ENCODE measurements at regions of chr12 and their contacts with region 1.

Region 1: DNA sequence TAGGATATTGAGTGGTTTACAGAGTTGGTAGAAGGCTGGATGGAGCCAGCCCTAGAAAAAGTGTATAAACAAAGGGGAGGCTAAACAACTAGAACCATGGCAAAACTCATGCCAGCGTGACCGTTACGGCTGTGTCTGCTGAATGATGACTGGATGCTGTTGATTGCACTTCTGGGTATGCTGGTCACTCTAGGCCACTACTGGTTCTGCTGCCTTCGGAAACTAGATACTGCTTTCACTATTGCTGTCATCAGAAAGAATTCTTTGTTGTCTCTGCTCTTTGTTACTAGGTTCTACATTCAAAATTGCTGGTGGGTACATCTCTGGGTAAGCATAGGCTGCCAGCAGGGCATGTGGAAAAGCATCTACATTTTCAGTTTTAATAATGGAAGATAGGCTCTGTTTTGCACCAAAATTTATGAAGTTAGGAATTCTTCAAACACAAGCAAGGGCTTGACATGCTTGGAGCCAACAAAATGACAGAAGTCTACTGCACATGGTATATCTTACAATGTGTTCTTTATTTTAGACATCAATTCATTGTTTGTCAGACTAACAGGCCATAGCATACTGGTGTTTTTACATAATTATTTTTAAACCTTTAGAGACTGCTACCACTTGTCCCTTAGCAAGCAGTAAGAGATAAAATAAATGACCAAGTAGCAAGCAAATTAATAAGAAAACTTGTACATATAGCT is 15.4 kb downstream of the MON2 start:
- DNase-seq: no peak
- ATAC-seq: no peak
- H3K4me3 ChIP-seq: no peak overlapping the region
- H3K27ac ChIP-seq: no peak overlapping the region
- H3K4me1 ChIP-seq: no peaks in the 10 kb centered on the region
- H3K27me3 ChIP-seq: no peaks in the 10 kb centered on the region
- CTCF ChIP-seq: no peak
- EP300 ChIP-seq: no peak
- POLR2A ChIP-seq: no peak
- RAD21 ChIP-seq: no peak

Region 2: GRCh38 chr12:62446754-62447452 is 35.1 kb before region 1 on chr12:
- CTCF ChIA-PET with region 1: no interaction called
- POLR2A ChIA-PET with region 1: no interaction called
- in situ Hi-C with region 1: no loop called
- intact Hi-C with region 1: no loop called
- DNase-seq: no peak
- ATAC-seq: no peak
- H3K4me3 ChIP-seq: no peak overlapping the region
- H3K27ac ChIP-seq: no peak overlapping the region
- H3K4me1 ChIP-seq: no peaks in the 10 kb centered on the region
- H3K27me3 ChIP-seq: no peaks in the 10 kb centered on the region
- CTCF ChIP-seq: no peak
- EP300 ChIP-seq: no peak
- POLR2A ChIP-seq: no peak
- RAD21 ChIP-seq: no peak

Region 3: DNA sequence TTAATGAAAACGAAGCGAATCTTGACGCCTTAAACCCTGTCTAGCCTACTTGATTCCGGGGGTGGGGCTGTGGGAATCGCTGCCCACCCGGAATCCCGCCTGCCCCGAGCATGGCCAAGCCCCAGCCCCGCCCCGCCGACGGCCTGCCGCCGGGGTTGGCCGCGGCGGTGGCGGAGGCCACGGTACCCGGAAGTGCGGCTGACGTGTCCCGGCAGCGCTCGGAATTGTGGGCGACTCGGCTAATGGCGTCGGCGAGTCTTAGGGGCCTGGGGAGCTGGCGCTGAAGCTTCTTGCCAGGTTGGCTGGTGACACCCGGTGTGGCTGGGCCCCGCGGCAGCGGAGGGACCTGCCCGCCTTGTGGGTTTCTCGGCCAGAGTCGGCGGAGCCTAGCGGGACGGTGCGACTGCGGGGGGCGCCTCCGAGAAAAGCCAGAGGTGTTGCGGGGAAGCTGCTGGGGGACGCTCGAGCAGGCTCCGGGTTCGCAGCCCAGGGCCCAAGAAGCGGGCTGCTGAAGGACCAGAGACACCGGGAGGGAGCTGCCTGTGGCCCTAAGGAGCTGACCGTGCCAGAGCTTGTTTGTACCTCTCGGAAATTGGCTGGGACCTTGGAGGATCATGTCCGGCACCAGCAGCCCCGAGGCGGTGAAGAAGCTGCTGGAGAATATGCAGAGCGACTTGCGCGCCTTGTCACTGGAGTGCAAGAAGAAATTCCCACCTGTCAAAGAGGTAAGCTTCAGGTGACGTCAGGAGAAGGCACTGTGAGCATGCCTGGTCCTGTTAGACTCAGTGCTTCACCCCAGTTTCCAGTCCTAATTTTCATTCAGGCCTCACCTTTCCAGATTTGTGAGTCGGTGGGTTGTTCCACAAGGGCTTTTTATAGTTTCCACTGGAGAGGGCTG is 15.1 kb before region 1 on chr12 and contains the start of gene MON2:
- CTCF ChIA-PET with region 1: no interaction called
- POLR2A ChIA-PET with region 1: interaction called, 10 read pairs
- in situ Hi-C with region 1: no loop called
- intact Hi-C with region 1: no loop called
- DNase-seq: peak; percentile 86 to 93 (median 90)
- ATAC-seq: peak; percentile 98
- H3K4me3 ChIP-seq: peak within 1 kb of the TSS; percentile 98
- H3K27ac ChIP-seq: peak within 1 kb of the TSS; percentile 91
- H3K4me1 ChIP-seq: peaks cover 3 to 14% of the 10 kb centered on the region in 2 experiments; a peak in 4 of 5 replicates
- H3K27me3 ChIP-seq: no peaks in the 10 kb centered on the region
- CTCF ChIP-seq: peak in 1 of 3 experiments; percentile 2; a peak in 1 of 6 replicates
- EP300 ChIP-seq: no peak
- POLR2A ChIP-seq: peak; percentile 91
- RAD21 ChIP-seq: no peak
- polyA plus RNA-seq, gene MON2: 3.6 to 4.3 TPM